RWPE1 (cell line): ENCODE measurements at regions of chr9 and their contacts with region 1.

Region 1: DNA sequence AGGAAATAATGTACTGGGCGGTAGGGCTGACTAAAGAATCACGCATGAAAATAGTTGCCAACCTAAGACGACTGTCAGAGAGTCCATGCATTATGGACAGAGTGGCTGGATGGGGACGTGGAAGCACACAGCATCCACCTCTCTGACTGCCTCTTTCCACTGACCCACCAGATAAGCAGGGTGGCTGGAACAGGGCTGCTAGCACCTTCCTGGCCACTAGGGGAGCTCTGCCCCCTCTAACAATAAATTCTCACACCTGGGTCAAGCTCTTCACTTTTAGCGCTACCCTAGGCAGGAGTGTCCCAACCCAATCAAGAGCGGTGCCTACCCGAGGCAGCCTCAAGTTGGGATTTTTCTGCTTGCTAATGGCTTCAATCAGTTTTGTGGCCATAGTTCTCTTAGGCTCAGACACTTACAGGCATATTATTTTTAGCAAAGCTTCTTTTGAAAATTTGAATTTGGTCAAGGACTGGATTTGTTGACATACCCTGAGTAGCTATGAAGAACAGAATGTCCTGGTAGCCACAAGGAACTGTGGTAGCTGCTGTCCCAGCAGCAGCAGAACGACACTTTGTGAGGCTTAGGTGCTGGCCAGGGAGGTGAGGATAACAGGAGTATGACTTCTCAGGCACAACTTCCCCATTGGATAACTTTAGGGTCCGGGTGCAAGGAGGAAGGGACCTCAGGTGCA is 6.9 kb upstream of the TPM2 start:
- DNase-seq: peak; percentile 77
- H3K27ac ChIP-seq: peak overlapping the region; percentile 45
- CTCF ChIP-seq: peak; percentile 100

Region 2: GRCh38 chr9:35664531-35665470 is 31.9 kb before region 1 on chr9 and contains the start of gene ARHGEF39:
- CTCF ChIA-PET with region 1: interaction called, 10 read pairs
- POLR2A ChIA-PET with region 1: no interaction called
- DNase-seq: peak; percentile 93
- H3K27ac ChIP-seq: peak within 1 kb of the TSS; percentile 88
- CTCF ChIP-seq: no peak; the same call in 1 of the 2 replicates

Region 3: GRCh38 chr9:35711501-35712428 is 15.1 kb after region 1 on chr9:
- CTCF ChIA-PET with region 1: interaction called, 11 read pairs
- POLR2A ChIA-PET with region 1: no interaction called
- DNase-seq: no peak
- H3K27ac ChIP-seq: peak overlapping the region; percentile 24
- CTCF ChIP-seq: no peak